Gastrocnemius medialis (tissue), 4 donors: ENCODE measurements at regions of chr6 and their contacts with region 1.

Region 1: DNA sequence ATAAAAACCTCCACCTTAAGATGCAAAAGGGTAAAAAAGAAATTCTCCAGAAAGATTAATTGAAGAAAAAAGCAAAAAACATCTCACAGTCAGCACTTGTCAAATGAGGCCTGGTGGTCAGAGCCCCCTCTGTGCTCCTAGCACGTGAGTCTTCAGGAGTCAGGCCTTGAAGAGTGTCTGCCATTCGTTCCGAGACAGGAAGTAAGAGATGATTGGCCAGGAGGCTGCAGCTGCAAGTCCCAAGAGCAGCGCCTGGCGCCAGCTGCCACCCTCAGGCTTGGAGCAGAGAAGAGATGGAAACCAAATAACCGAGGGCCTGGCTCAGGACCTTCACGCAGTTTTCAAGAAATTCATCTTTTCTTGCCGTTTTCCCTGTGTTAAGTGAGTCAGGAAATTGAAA is 65.0 kb downstream of the FAM120B start:
- DNase-seq: peak; percentile 6 to 29
- ATAC-seq: no peak
- H3K4me3 ChIP-seq: no peak overlapping the region
- H3K27ac ChIP-seq: peak overlapping the region; percentile 73 to 80 (median 78)
- H3K4me1 ChIP-seq: peaks cover 43% of the 10 kb centered on the region in 2 donors
- H3K27me3 ChIP-seq: no peaks in the 10 kb centered on the region
- CTCF ChIP-seq: no peak
- POLR2A ChIP-seq: no peak

Region 2: GRCh38 chr6:170438402-170438753 is 66.8 kb after region 1 on chr6:
- in situ Hi-C with region 1: no loop called
- intact Hi-C with region 1: loop called (anchors 2 kb)
- DNase-seq: peak; percentile 97 to 98
- ATAC-seq: peak; percentile 80 to 81
- H3K4me3 ChIP-seq: peak overlapping the region; percentile 23 to 38 (median 26)
- H3K27ac ChIP-seq: peak overlapping the region; percentile 84 to 97 (median 92)
- H3K4me1 ChIP-seq: peaks cover 34 to 58% of the 10 kb centered on the region in 2 donors
- H3K27me3 ChIP-seq: no peaks in the 10 kb centered on the region
- CTCF ChIP-seq: no peak
- POLR2A ChIP-seq: peak; percentile 70 to 71